ENCODE measurements at regions of chr5 and their contacts with region 1.

Region 1: DNA sequence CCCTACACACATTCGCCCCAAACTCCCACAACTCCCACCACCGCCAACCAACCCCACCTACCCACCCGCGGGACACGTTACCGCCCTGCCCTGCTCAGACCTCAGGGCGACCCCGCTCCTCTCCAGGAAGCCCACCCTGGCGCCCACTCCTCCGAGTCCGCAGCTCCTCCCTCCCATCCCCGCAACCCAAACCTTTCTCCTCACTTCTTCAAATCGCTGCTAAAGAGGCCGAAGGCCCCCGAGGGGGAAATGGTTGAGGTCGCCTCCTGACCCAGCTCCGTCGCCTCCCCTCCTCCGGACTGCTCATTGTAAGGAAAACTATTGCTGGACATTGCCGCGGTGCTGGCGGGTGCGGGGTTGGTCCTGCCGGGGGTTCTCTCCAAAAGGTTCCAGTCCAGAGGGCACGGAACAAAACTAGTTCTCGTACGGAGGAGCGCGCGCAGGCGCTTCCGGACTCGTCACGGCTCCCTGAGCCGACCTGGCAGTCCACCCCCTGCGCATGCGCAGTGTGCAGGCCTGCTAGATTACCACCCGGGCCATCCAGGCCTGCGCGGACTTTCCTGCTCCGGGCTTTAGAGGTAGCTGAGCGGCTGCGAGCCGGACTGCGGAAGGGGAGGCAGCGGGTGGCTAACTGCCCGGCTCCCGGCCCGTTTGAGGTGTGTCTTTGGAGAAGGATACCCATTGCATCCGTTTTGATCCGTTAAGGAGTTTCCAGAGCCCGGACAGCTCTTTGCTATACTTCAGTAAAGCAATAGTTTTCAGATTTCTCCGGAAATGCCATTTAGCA is at the start of gene AP3B1:
- DNase-seq: peak; percentile 97 to 99
- ATAC-seq: peak; percentile 95 to 98
- H3K4me3 ChIP-seq: peak within 1 kb of the TSS; percentile 83 to 99 (median 91)
- H3K27ac ChIP-seq: peak within 1 kb of the TSS; percentile 79 to 93 (median 89)
- H3K4me1 ChIP-seq: peaks cover 15 to 16% of the 10 kb centered on the region in 2 donors
- H3K27me3 ChIP-seq: peaks cover 0 to 4% (median 0%) of the 10 kb centered on the region in 3 donors
- CTCF ChIP-seq: peak in 1 of 5 experiments; percentile 10
- POLR2A ChIP-seq: peak; percentile 79 to 86
- total RNA-seq, gene AP3B1: 17.9 to 26.0 (median 22.6) TPM

Region 2: DNA sequence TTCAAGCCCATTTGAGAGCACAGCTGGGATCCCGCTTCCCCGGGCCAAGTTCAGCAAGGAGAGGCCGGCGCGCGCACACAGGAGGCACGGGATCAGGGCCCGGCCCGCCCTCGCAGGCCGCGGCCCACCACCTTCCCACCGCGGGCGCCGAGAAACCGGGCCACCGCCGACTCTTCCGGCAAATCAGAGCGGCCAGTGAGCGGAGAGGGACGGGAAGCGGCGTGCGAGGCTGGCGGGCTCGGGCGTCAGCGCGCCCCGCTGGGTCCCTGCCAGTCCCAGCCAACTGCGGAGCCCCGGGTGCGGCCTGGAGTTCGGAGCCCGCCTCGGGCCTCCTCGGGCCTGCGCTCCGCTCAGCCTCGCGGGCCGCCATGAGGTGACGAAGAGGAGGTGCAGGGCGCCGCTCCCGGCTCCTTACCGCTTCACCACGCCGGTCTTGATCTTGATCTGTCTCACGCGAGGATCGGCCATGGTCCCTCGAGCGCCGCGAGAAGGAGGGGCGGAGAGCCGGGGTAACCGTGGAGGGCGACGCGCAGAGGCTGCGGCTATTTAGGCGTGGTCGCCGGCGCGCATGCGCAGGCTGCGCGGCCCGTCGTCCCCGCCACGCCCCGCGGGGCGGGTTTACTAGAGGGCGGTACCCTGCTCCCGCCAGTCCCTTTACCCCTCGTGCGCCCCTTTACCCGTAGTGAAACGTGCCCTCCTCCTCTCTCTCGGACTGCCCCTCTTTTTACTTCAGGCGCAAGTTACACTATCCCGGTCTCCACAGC is 518.5 kb before region 1 on chr5 and contains the start of gene TBCA:
- in situ Hi-C with region 1: no loop called
- intact Hi-C with region 1: loop called (anchors 5 kb)
- DNase-seq: peak; percentile 63 to 81
- ATAC-seq: peak; percentile 90 to 91
- H3K4me3 ChIP-seq: peak within 1 kb of the TSS; percentile 68 to 96 (median 86)
- H3K27ac ChIP-seq: peak within 1 kb of the TSS; percentile 86 to 99 (median 98)
- H3K4me1 ChIP-seq: peaks cover 42 to 43% of the 10 kb centered on the region in 2 donors
- H3K27me3 ChIP-seq: no peaks in the 10 kb centered on the region
- CTCF ChIP-seq: peak; percentile 4 to 44 (median 18)
- POLR2A ChIP-seq: peak; percentile 93 to 95
- total RNA-seq, gene TBCA: 63.7 to 106 (median 88.1) TPM

Region 3: DNA sequence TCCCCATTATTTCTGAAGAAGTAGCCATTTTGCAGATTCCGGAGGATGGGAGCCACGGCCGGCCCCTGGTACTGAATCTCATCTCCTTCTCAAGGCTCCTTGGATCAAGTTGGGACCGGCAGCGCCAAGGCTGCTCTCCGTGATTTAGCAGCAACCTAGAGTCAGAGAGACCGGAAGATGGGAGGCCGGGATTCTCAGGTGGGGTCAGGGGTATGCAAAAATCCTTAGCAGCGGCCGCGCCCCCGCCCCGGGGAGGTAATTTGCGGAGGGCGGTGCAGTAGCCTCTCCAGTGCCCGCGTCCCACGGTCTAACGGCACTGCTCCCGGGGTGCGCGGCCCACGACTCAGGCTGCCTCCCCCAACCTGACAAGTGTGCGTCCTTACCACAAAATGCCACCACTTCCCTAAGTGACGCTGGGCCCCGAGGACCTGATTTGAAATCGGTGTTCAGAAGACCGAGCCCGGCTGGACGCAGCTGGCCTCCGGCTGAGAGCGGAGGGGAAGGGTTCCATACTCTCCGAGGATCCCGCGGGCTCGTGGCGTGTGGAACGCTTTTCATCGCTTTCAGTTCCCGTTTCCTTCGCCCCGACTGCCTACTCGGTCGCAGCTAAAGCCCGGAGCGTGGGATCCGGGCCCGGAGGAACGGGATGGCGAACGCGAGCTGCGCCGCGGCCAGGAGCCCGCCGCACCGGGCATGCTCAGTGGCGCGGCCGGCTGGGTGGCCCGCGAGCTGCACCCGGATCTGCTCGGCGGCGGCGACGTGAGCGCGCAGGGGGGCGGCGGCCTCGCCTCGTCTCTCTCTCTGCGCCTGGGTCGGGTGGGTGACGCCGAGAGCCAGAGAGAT is 65.6 kb after region 1 on chr5 and contains the start of gene SCAMP1:
- in situ Hi-C with region 1: loop called (anchors 5 kb)
- intact Hi-C with region 1: loop called (anchors 1 kb)
- DNase-seq: peak; percentile 83 to 87
- ATAC-seq: peak; percentile 88 to 89
- H3K4me3 ChIP-seq: peak within 1 kb of the TSS; percentile 81 to 100 (median 99)
- H3K27ac ChIP-seq: peak within 1 kb of the TSS; percentile 89 to 95 (median 92)
- H3K4me1 ChIP-seq: peaks cover 24 to 26% of the 10 kb centered on the region in 2 donors
- H3K27me3 ChIP-seq: no peaks in the 10 kb centered on the region
- CTCF ChIP-seq: peak in 4 of 5 experiments; percentile 47 to 69 (median 64)
- POLR2A ChIP-seq: peak; percentile 76 to 79
- total RNA-seq, gene SCAMP1: 17.5 to 35.2 (median 22.0) TPM

Region 4: GRCh38 chr5:78377056-78377717 is 82.7 kb after region 1 on chr5:
- in situ Hi-C with region 1: no loop called
- intact Hi-C with region 1: loop called (anchors 5 kb)
- DNase-seq: peak; percentile 20 to 27
- ATAC-seq: peak; percentile 84 to 89
- H3K4me3 ChIP-seq: peak overlapping the region in 2 of 4 donors; percentile 1 to 18
- H3K27ac ChIP-seq: peak overlapping the region; percentile 55 to 75 (median 62)
- H3K4me1 ChIP-seq: peaks cover 26 to 43% of the 10 kb centered on the region in 2 donors
- H3K27me3 ChIP-seq: no peaks in the 10 kb centered on the region
- CTCF ChIP-seq: no peak
- POLR2A ChIP-seq: no peak

Region 5: DNA sequence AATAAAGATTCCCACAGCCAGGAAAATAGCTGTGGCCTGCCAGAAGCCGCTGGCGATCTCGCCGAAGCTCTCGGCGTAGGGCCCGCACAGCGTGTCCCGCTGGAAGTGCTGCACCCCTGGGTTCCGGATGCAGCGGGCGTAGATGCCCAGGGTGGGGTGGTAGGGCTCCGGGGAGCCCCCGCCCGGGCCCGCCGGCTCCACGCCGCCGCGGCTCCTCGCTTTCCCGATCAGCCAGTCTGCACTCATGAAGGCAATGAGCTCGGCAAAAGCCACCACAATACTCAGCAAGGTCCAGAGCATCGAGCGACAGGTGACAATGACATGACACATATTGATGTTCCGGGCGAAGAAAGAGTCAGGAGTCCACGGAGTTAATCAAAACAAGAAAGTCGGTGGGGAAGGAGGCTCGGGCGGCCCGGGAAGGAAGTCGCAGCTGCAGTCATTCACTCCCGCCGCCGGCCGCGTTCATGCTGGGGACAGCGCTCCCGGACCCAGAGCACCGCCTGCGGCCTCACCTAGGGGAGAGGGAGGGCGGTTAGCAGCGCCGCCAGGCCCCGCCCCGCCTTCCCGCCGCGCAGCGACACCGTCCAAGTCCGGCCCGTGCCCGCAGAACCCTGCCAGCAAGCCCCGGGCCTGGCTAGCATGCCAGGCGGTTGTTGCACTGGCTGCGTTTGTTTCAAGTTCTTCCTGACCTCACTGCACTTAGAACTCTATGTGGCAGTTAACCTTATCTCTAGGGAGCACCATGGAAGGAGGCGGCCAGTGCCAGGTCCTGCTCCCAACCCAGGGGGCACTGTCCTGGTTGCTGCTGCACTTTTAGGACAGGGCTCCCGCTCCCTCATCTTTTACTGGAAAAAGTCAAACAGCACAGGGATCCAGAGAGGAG is 215.7 kb after region 1 on chr5:
- in situ Hi-C with region 1: no loop called
- intact Hi-C with region 1: loop called (anchors 10 kb)
- DNase-seq: peak; percentile 43 to 68
- ATAC-seq: peak; percentile 70 to 73
- H3K4me3 ChIP-seq: peak overlapping the region; percentile 53 to 65 (median 54)
- H3K27ac ChIP-seq: peak overlapping the region; percentile 42 to 72 (median 56)
- H3K4me1 ChIP-seq: peaks cover 26 to 34% of the 10 kb centered on the region in 2 donors
- H3K27me3 ChIP-seq: no peaks in the 10 kb centered on the region
- CTCF ChIP-seq: peak in 1 of 5 experiments; percentile 19
- POLR2A ChIP-seq: peak; percentile 16

Region 6: DNA sequence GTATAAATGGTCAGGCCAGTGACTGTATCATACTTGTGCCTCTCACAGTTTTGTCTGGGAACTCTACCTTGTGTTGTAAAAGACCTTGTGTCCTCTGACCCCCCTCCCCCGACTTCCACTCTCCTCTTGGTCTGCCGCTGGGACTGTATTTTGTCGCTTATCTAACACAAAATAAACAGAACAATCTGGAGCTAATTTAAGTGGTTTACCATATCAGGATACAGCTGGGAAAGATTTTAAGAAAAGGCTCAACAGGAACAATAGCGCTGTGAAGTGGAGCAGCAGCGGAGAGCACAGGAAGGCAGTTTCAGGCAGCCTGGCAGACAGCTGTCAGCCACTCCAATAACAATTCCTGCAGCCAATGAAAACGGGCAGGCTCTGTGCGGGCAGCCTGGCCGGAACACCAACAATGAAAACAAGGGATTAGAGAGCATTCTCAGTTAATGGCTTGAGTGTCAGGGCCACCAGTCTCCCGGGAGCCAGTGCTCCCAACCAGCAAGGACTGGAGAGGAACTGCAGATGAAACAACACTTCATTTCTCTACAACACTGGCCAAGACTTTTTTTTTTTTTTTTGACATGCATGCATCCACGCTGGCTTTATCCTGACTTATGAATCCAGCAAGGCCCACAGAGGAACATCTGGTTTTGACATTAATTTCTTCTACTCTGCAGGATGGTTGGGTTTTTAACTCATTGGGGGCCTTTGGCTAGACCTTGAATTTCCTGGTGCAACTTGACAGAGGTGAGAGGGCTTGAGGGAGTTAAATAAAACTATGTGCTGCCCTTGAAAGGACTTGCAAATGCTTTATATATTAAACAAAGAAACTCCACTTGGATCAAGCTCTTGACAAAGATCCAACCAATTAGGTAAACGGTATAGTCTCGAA is 614.0 kb after region 1 on chr5:
- in situ Hi-C with region 1: no loop called
- intact Hi-C with region 1: loop called (anchors 2 kb)
- DNase-seq: peak; percentile 45 to 56
- ATAC-seq: peak; percentile 82 to 90
- H3K4me3 ChIP-seq: peak overlapping the region; percentile 26 to 40 (median 36)
- H3K27ac ChIP-seq: peak overlapping the region; percentile 70 to 78 (median 72)
- H3K4me1 ChIP-seq: peaks cover 31 to 33% of the 10 kb centered on the region in 2 donors
- H3K27me3 ChIP-seq: no peaks in the 10 kb centered on the region
- CTCF ChIP-seq: no peak
- POLR2A ChIP-seq: no peak

Measured in gastrocnemius medialis (tissue), 4 donors.